A549 (cell line): ENCODE measurements at regions of chr19 and their contacts with region 1.

Region 1: DNA sequence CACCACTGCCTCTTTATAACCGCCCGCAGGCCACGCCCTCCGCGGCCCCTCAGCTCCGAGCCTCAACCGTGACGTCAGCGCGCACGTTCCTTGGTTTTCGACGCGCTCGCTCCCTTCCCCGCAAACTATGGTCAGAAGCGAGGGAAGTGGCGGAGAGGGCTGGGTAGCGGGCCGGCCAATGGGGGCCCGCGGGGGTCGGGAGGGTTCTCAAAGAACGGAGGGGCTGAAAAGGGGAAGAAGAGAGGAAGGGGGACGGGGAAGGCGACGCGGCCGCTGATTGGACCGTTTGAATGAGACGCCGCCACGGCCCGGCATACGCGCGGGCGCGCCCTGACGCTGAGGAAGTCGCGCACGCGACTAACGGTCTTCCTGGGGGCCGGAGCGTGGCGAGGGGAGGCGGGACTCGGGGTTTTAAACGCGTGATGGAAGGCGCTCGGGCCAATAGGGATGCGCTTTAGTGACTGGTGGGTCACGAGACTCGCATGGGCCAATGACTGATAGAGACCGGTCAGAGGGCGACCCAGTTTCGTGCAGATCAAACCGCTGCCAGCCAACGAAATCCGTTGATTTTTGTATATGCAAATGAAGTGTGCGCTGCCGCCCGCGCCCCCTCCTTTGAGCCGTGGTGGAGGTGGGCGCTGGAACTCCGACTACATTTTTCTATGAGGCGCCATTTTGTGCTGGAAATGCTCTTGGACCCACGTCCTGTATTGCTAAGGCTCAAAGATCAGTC is 378 bp upstream of the UBE2S start:
- DNase-seq: peak; percentile 100
- ATAC-seq: peak; percentile 90 to 96
- H3K4me3 ChIP-seq: peak overlapping the region; percentile 98
- H3K27ac ChIP-seq: peak overlapping the region; percentile 95 to 97
- H3K4me1 ChIP-seq: peaks cover 36% of the 10 kb centered on the region
- CTCF ChIP-seq: no peak
- EP300 ChIP-seq: no peak
- POLR2A ChIP-seq: no peak
- RAD21 ChIP-seq: no peak

Region 2: DNA sequence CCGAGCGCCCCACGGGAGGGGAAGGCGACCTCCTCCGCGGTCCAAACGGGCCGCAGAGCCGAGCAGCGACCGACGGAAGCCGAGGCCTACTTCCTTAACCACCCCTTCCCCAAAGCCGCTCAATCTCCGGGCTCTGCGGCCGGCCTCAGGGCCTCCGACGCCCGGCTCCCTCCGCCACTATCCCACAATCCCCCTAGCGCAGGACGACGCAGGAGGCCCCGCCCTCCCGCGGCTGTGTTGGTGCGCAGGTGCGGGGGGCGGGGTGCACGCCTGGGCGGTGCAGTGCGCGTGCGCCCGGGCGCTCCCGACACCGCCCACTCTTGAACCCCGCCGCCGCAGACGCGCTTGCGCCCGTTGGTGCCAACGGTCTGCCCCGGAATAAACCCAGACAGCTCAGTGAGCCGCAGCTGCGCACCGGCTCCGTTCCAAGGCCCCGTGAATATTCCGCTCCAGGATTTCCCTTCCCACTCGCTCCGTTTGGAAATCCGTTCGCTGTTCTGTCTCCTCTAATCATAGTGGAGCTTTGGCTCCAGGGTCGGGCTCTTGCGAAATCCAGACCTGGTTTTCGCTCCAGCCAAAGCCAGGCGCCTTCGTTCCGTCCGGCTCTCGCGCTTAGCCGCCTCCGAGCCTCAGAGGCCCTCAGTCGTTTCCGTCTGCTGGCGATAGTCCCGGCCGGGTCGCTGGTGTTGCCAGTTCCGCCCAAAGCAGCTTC is 149.0 kb before region 1 on chr19 and contains the start of gene PPP6R1:
- CTCF ChIA-PET with region 1: interaction called, 3 read pairs
- POLR2A ChIA-PET with region 1: interaction called, 20 read pairs
- DNase-seq: peak; percentile 99 to 100
- ATAC-seq: peak; percentile 83 to 93
- H3K4me3 ChIP-seq: peak within 1 kb of the TSS; percentile 81
- H3K27ac ChIP-seq: peak within 1 kb of the TSS; percentile 87 to 95
- H3K4me1 ChIP-seq: peaks cover 36% of the 10 kb centered on the region
- CTCF ChIP-seq: no peak
- EP300 ChIP-seq: peak in 1 of 2 experiments; percentile 31; a peak in 1 of 5 replicates
- POLR2A ChIP-seq: peak; percentile 87
- RAD21 ChIP-seq: peak; percentile 44 to 61; a peak in 4 of 5 replicates
- polyA plus RNA-seq, gene PPP6R1: 42.9 and 44.6 TPM in 2 replicates

Region 3: GRCh38 chr19:55279770-55280643 is 128.0 kb before region 1 on chr19 and contains the start of gene HSPBP1:
- CTCF ChIA-PET with region 1: interaction called, 4 read pairs
- POLR2A ChIA-PET with region 1: interaction called, 19 read pairs
- DNase-seq: peak; percentile 85 to 100
- ATAC-seq: peak; percentile 92 to 95
- H3K4me3 ChIP-seq: peak within 1 kb of the TSS; percentile 75
- H3K27ac ChIP-seq: peak within 1 kb of the TSS; percentile 80 to 92
- H3K4me1 ChIP-seq: peaks cover 33% of the 10 kb centered on the region
- CTCF ChIP-seq: no peak
- EP300 ChIP-seq: no peak
- POLR2A ChIP-seq: peak; percentile 67
- RAD21 ChIP-seq: no peak
- polyA plus RNA-seq, gene HSPBP1: 52.1 and 55.3 TPM in 2 replicates

Region 4: GRCh38 chr19:55385740-55386529 is 22.0 kb before region 1 on chr19 and contains the start of gene RPL28:
- CTCF ChIA-PET with region 1: interaction called, 4 read pairs
- POLR2A ChIA-PET with region 1: interaction called, 55 read pairs
- DNase-seq: peak; percentile 92 to 99
- ATAC-seq: peak; percentile 54 to 77
- H3K4me3 ChIP-seq: peak within 1 kb of the TSS; percentile 89
- H3K27ac ChIP-seq: peak within 1 kb of the TSS; percentile 91 to 99
- H3K4me1 ChIP-seq: peaks cover 50% of the 10 kb centered on the region
- CTCF ChIP-seq: no peak
- EP300 ChIP-seq: no peak
- POLR2A ChIP-seq: peak; percentile 100
- RAD21 ChIP-seq: no peak
- polyA plus RNA-seq, gene RPL28: 329 and 351 TPM in 2 replicates

Region 5: DNA sequence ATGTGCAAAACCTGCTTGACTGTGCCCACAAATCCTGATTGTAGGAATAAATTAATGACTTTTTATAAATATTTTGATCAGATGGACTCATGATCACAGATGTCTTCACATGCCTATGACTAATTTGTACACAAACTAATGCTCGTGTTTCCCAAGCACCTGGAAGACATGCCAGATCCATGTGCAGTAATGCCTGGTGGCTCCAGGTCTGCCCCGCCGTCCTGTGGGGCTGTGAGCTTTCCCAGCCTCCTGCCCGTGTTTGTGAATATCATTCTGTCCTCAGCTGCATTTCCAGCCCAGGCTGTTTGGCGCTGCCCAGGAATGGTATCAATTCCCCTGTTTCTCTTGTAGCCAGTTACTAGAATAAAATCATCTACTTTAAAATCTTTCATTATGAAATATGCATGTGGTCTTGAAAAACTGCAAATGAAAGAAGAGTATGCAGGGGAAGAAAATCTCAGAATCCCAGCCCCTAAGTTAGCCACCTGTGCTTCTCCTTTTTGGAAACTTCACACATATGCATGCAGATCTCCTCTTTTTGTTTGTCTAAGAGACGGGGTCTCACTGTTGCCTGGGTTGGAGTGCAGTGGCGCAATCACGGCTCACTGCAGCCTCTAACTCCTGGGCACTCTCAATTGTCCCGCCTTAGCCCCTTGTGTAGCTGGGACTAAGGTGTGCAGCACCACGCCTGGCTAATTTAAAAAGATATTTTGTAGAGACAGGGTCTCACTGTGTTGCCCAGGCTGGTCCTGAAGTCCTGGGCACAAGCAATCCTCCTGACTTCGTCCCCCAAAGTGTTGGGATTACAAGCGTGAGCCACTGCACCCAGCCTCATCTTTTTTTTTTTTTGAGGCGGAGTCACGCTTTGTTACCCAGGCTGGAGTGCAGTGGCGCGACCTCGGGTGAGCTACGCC is 16.0 kb before region 1 on chr19:
- CTCF ChIA-PET with region 1: interaction called, 8 read pairs
- POLR2A ChIA-PET with region 1: interaction called, 55 read pairs
- DNase-seq: no peak
- ATAC-seq: peak; percentile 6 to 27; a peak in 3 of 6 replicates
- H3K4me3 ChIP-seq: no peak overlapping the region
- H3K27ac ChIP-seq: peak overlapping the region in 1 of 2 experiments; percentile 19; a peak in 3 of 6 replicates
- H3K4me1 ChIP-seq: peaks cover 61% of the 10 kb centered on the region
- CTCF ChIP-seq: no peak
- EP300 ChIP-seq: no peak
- POLR2A ChIP-seq: no peak
- RAD21 ChIP-seq: no peak

Region 6: GRCh38 chr19:55437410-55438075 is 29.6 kb after region 1 on chr19:
- CTCF ChIA-PET with region 1: interaction called, 5 read pairs
- POLR2A ChIA-PET with region 1: interaction called, 12 read pairs
- DNase-seq: peak; percentile 87 to 89
- ATAC-seq: peak; percentile 72 to 90
- H3K4me3 ChIP-seq: no peak overlapping the region
- H3K27ac ChIP-seq: no peak overlapping the region
- H3K4me1 ChIP-seq: peaks cover 12% of the 10 kb centered on the region
- CTCF ChIP-seq: no peak
- EP300 ChIP-seq: no peak
- POLR2A ChIP-seq: no peak
- RAD21 ChIP-seq: no peak